Activated CD8-positive, alpha-beta T cell treated with anti-CD3 and anti-CD28 coated beads for 36 hours (primary cell): ENCODE measurements at regions of chr7 and their contacts with region 1.

Region 1: DNA sequence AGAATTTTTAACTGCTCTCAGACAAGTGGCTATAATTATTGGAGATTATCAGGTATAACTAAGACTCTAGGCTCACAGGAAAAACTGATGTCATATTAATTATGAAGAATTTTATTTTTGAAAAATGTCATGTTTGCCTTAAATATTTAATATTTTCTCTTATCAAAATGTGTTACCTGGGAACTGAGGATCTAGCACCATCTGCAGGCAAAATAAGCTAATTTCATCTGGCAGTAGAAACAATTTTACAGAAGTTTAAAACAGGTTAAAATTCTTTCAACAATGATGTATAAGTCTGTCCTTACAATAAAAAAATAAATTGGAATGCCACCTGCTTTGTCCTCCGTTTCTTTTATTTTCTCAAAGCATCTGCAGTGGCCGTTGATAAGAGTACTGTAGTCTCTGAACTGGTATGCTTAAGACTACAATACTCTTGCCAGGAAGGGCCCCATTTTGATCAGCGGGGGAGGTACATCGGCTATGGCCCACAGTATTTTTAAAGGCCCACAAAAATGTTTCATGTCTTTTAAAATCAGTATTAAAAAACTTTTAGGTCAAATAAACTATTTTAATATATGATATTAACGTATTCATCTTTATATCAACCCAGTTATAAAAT is 81.3 kb downstream of the VWDE start:
- DNase-seq: peak; percentile 13
- ATAC-seq: no peak
- H3K4me3 Mint-ChIP-seq: no peak overlapping the region
- H3K27ac Mint-ChIP-seq: no peak overlapping the region
- H3K4me1 Mint-ChIP-seq: no peaks in the 10 kb centered on the region
- H3K27me3 Mint-ChIP-seq: no peaks in the 10 kb centered on the region
- CTCF ChIP-seq: peak; percentile 85

Region 2: DNA sequence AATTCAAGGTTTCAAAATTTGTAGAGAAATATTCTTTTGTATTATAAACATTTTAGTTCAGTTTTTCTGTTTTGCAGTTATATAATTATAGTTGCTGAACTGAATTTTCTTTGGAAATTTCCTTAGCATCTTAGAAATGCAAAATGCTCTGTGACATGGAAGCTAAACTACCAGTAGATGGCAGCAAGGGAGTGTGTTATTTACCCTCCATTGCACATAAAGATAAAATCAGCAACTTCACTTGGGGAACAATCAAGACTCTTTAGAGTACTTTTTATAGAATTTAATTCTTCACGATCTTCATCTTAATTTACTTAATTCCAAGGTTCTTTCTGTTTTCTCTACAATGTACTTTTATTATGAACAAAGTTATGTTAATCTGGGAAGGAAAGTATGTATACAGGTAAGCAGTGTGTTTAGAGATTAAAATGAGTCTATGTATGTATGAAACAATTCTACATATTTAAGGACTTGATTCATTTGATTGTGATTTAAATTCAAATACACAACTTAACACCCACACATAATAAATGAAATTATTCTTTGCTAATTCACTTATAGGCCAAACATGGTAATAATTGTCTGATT is 894.6 kb before region 1 on chr7:
- CTCF ChIA-PET with region 1: no interaction called
- POLR2A ChIA-PET with region 1: no interaction called
- intact Hi-C with region 1: loop called (anchors 5 kb)
- DNase-seq: peak; percentile 4
- ATAC-seq: no peak
- H3K4me3 Mint-ChIP-seq: no peak overlapping the region
- H3K27ac Mint-ChIP-seq: no peak overlapping the region
- H3K4me1 Mint-ChIP-seq: no peaks in the 10 kb centered on the region
- H3K27me3 Mint-ChIP-seq: no peaks in the 10 kb centered on the region
- CTCF ChIP-seq: peak; percentile 56

Region 3: GRCh38 chr7:12067141-12067831 is 255.1 kb before region 1 on chr7:
- CTCF ChIA-PET with region 1: interaction called, 23 read pairs
- POLR2A ChIA-PET with region 1: no interaction called
- intact Hi-C with region 1: loop called (anchors 1 kb)
- DNase-seq: peak; percentile 72
- ATAC-seq: peak; percentile 65
- H3K4me3 Mint-ChIP-seq: no peak overlapping the region
- H3K27ac Mint-ChIP-seq: no peak overlapping the region
- H3K4me1 Mint-ChIP-seq: peaks cover 3% of the 10 kb centered on the region
- H3K27me3 Mint-ChIP-seq: no peaks in the 10 kb centered on the region
- CTCF ChIP-seq: peak; percentile 52

Region 4: GRCh38 chr7:12211054-12211710 is 111.2 kb before region 1 on chr7 and contains the start of gene TMEM106B:
- CTCF ChIA-PET with region 1: interaction called, 5 read pairs
- POLR2A ChIA-PET with region 1: interaction called, 3 read pairs
- intact Hi-C with region 1: loop called (anchors 5 kb)
- DNase-seq: peak; percentile 98
- ATAC-seq: peak; percentile 92
- H3K4me3 Mint-ChIP-seq: peak within 1 kb of the TSS; percentile 90
- H3K27ac Mint-ChIP-seq: peak within 1 kb of the TSS; percentile 96
- H3K4me1 Mint-ChIP-seq: peaks cover 32% of the 10 kb centered on the region
- H3K27me3 Mint-ChIP-seq: no peaks in the 10 kb centered on the region
- CTCF ChIP-seq: no peak
- total RNA-seq, gene TMEM106B: 27.1 to 28.8 TPM

Region 5: GRCh38 chr7:12244129-12244528 is 78.3 kb before region 1 on chr7:
- CTCF ChIA-PET with region 1: no interaction called
- POLR2A ChIA-PET with region 1: no interaction called
- intact Hi-C with region 1: no loop called
- DNase-seq: no peak
- ATAC-seq: no peak
- H3K4me3 Mint-ChIP-seq: no peak overlapping the region
- H3K27ac Mint-ChIP-seq: no peak overlapping the region
- H3K4me1 Mint-ChIP-seq: peaks cover 15% of the 10 kb centered on the region
- H3K27me3 Mint-ChIP-seq: no peaks in the 10 kb centered on the region
- CTCF ChIP-seq: no peak

Region 6: GRCh38 chr7:12257582-12257981 is 64.8 kb before region 1 on chr7:
- CTCF ChIA-PET with region 1: no interaction called
- POLR2A ChIA-PET with region 1: no interaction called
- intact Hi-C with region 1: no loop called
- DNase-seq: peak; percentile 38
- ATAC-seq: peak; percentile 86
- H3K4me3 Mint-ChIP-seq: no peak overlapping the region
- H3K27ac Mint-ChIP-seq: no peak overlapping the region
- H3K4me1 Mint-ChIP-seq: peaks cover 11% of the 10 kb centered on the region
- H3K27me3 Mint-ChIP-seq: no peaks in the 10 kb centered on the region
- CTCF ChIP-seq: no peak